GM12878 (cell line): ENCODE measurements at regions of chr9 and their contacts with region 1.

Region 1: GRCh38 chr9:84261082-84261746 is 79.3 kb downstream of the SLC28A3 start:
- DNase-seq: peak; percentile 40
- ATAC-seq: peak; percentile 96
- H3K4me3 ChIP-seq: no peak overlapping the region
- H3K27ac ChIP-seq: no peak overlapping the region
- H3K4me1 ChIP-seq: no peaks in the 10 kb centered on the region
- H3K27me3 ChIP-seq: no peaks in the 10 kb centered on the region
- CTCF ChIP-seq: peak; percentile 82 to 91 (median 88)
- EP300 ChIP-seq: no peak
- POLR2A ChIP-seq: no peak
- RAD21 ChIP-seq: peak; percentile 86

Region 2: GRCh38 chr9:83622939-83623678 is 638.1 kb before region 1 on chr9 and contains the start of gene IDNK:
- CTCF ChIA-PET with region 1: interaction called, 8 read pairs
- POLR2A ChIA-PET with region 1: no interaction called
- RAD21 ChIA-PET with region 1: no interaction called
- SMC1A ChIA-PET with region 1: no interaction called
- in situ Hi-C with region 1: loop called (anchors 25 kb)
- intact Hi-C with region 1: no loop called
- DNase-seq: no peak
- ATAC-seq: peak; percentile 94
- H3K4me3 ChIP-seq: peak within 1 kb of the TSS; percentile 97
- H3K27ac ChIP-seq: peak within 1 kb of the TSS; percentile 91
- H3K4me1 ChIP-seq: peaks cover 6% of the 10 kb centered on the region; the same call in 1 of the 2 replicates
- H3K27me3 ChIP-seq: no peaks in the 10 kb centered on the region
- CTCF ChIP-seq: no peak
- EP300 ChIP-seq: no peak
- POLR2A ChIP-seq: peak; percentile 93
- RAD21 ChIP-seq: no peak
- polyA plus RNA-seq, gene IDNK: 8.7 to 8.9 TPM

Region 3: DNA sequence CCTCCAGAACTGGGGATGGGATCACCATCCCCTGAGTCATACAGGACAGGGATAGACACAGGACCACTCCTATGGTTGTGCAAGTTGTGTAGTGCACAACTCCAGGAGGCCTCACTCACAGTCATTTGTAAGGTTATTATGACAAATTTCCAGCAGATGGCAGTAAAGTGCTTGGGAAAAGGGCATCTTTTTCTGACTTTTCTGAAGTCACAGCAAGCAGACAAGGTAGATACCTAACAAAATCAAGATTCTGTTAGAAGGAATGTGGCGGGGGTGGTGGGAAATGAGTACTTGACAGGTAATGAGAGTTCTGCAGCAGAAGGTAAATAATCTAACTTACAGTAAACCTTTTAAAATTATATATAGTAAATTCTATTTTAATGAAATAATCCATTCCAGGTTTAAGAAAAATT is 323.3 kb before region 1 on chr9:
- CTCF ChIA-PET with region 1: interaction called, 40 read pairs
- POLR2A ChIA-PET with region 1: no interaction called
- RAD21 ChIA-PET with region 1: interaction called, 16 read pairs
- SMC1A ChIA-PET with region 1: interaction called, 26 read pairs
- in situ Hi-C with region 1: loop called (anchors 5 kb)
- intact Hi-C with region 1: loop called (anchors 1 kb)
- DNase-seq: no peak
- ATAC-seq: peak; percentile 88
- H3K4me3 ChIP-seq: no peak overlapping the region
- H3K27ac ChIP-seq: no peak overlapping the region
- H3K4me1 ChIP-seq: no peaks in the 10 kb centered on the region
- H3K27me3 ChIP-seq: no peaks in the 10 kb centered on the region
- CTCF ChIP-seq: peak; percentile 47 to 72 (median 65); a peak in 5 of 6 replicates
- EP300 ChIP-seq: no peak
- POLR2A ChIP-seq: no peak
- RAD21 ChIP-seq: peak; percentile 88

Region 4: GRCh38 chr9:84170521-84171141 is 90.6 kb before region 1 on chr9:
- CTCF ChIA-PET with region 1: interaction called, 24 read pairs
- POLR2A ChIA-PET with region 1: no interaction called
- RAD21 ChIA-PET with region 1: interaction called, 5 read pairs
- SMC1A ChIA-PET with region 1: interaction called, 10 read pairs
- in situ Hi-C with region 1: no loop called
- intact Hi-C with region 1: loop called (anchors 5 kb)
- DNase-seq: no peak
- ATAC-seq: no peak
- H3K4me3 ChIP-seq: no peak overlapping the region
- H3K27ac ChIP-seq: no peak overlapping the region
- H3K4me1 ChIP-seq: no peaks in the 10 kb centered on the region
- H3K27me3 ChIP-seq: no peaks in the 10 kb centered on the region; a peak in 1 of 4 replicates
- CTCF ChIP-seq: no peak
- EP300 ChIP-seq: no peak
- POLR2A ChIP-seq: no peak
- RAD21 ChIP-seq: no peak

Region 5: GRCh38 chr9:84244850-84245249 is 16.4 kb before region 1 on chr9:
- CTCF ChIA-PET with region 1: interaction called, 14 read pairs
- POLR2A ChIA-PET with region 1: no interaction called
- RAD21 ChIA-PET with region 1: interaction called, 3 read pairs
- SMC1A ChIA-PET with region 1: interaction called, 4 read pairs
- in situ Hi-C with region 1: no loop called
- intact Hi-C with region 1: no loop called
- DNase-seq: no peak
- ATAC-seq: no peak
- H3K4me3 ChIP-seq: no peak overlapping the region
- H3K27ac ChIP-seq: no peak overlapping the region
- H3K4me1 ChIP-seq: no peaks in the 10 kb centered on the region
- H3K27me3 ChIP-seq: no peaks in the 10 kb centered on the region
- CTCF ChIP-seq: no peak
- EP300 ChIP-seq: no peak
- POLR2A ChIP-seq: no peak
- RAD21 ChIP-seq: no peak

Region 6: GRCh38 chr9:84285381-84285780 is 24.2 kb after region 1 on chr9:
- CTCF ChIA-PET with region 1: interaction called, 31 read pairs
- POLR2A ChIA-PET with region 1: no interaction called
- RAD21 ChIA-PET with region 1: interaction called, 5 read pairs
- SMC1A ChIA-PET with region 1: interaction called, 11 read pairs
- in situ Hi-C with region 1: no loop called
- intact Hi-C with region 1: no loop called
- DNase-seq: no peak
- ATAC-seq: peak; percentile 58; the same call in 2 of the 3 replicates
- H3K4me3 ChIP-seq: peak overlapping the region; percentile 47; the same call in 1 of the 2 replicates
- H3K27ac ChIP-seq: no peak overlapping the region
- H3K4me1 ChIP-seq: peaks cover 5% of the 10 kb centered on the region; the same call in 1 of the 2 replicates
- H3K27me3 ChIP-seq: no peaks in the 10 kb centered on the region
- CTCF ChIP-seq: no peak
- EP300 ChIP-seq: no peak
- POLR2A ChIP-seq: no peak
- RAD21 ChIP-seq: no peak

Region 7: GRCh38 chr9:84304166-84304565 is 43.0 kb after region 1 on chr9:
- CTCF ChIA-PET with region 1: interaction called, 13 read pairs
- POLR2A ChIA-PET with region 1: no interaction called
- RAD21 ChIA-PET with region 1: no interaction called
- SMC1A ChIA-PET with region 1: interaction called, 4 read pairs
- in situ Hi-C with region 1: no loop called
- intact Hi-C with region 1: no loop called
- DNase-seq: no peak
- ATAC-seq: no peak
- H3K4me3 ChIP-seq: no peak overlapping the region
- H3K27ac ChIP-seq: no peak overlapping the region
- H3K4me1 ChIP-seq: no peaks in the 10 kb centered on the region
- H3K27me3 ChIP-seq: no peaks in the 10 kb centered on the region
- CTCF ChIP-seq: no peak
- EP300 ChIP-seq: no peak
- POLR2A ChIP-seq: no peak
- RAD21 ChIP-seq: no peak

Region 8: GRCh38 chr9:84436386-84437109 is 175.3 kb after region 1 on chr9:
- CTCF ChIA-PET with region 1: no interaction called
- POLR2A ChIA-PET with region 1: no interaction called
- RAD21 ChIA-PET with region 1: no interaction called
- SMC1A ChIA-PET with region 1: no interaction called
- in situ Hi-C with region 1: no loop called
- intact Hi-C with region 1: no loop called
- DNase-seq: no peak
- ATAC-seq: no peak
- H3K4me3 ChIP-seq: no peak overlapping the region
- H3K27ac ChIP-seq: no peak overlapping the region
- H3K4me1 ChIP-seq: no peaks in the 10 kb centered on the region
- H3K27me3 ChIP-seq: no peaks in the 10 kb centered on the region
- CTCF ChIP-seq: no peak
- EP300 ChIP-seq: no peak
- POLR2A ChIP-seq: no peak
- RAD21 ChIP-seq: no peak